Activated CD4-positive, alpha-beta memory T cell treated with anti-CD3 and anti-CD28 coated beads for 36 hours (primary cell): ENCODE measurements at regions of chr14 and their contacts with region 1.

Region 1: GRCh38 chr14:49977126-49977841 is 84.4 kb downstream of the ARF6 start:
- DNase-seq: peak; percentile 65
- H3K4me3 Mint-ChIP-seq: peak overlapping the region; percentile 66
- H3K27ac Mint-ChIP-seq: peak overlapping the region; percentile 91
- H3K4me1 Mint-ChIP-seq: peaks cover 87% of the 10 kb centered on the region
- H3K27me3 Mint-ChIP-seq: no peaks in the 10 kb centered on the region

Region 2: DNA sequence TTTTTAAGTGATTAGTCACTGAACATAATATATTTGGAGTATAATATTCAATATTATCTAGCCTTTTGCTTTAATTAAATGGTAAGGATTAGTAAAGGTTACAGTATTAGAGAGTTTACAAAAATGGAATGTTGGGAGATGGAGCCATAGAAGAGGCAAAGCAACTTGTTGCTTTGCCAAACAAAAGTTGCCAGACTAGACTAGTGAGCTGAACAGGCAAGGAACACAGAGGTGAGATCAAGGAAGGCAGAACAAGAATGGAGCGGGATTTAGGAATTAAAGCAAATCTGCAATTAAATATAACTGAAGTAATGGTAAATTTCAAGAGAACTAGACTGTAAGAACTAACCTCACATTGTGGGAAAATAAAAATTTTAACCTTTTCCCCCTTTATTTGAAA is 79.3 kb before region 1 on chr14:
- CTCF ChIA-PET with region 1: interaction called, 14 read pairs
- POLR2A ChIA-PET with region 1: interaction called, 47 read pairs
- intact Hi-C with region 1: no loop called
- DNase-seq: no peak
- H3K4me3 Mint-ChIP-seq: peak overlapping the region; percentile 75
- H3K27ac Mint-ChIP-seq: peak overlapping the region; percentile 93
- H3K4me1 Mint-ChIP-seq: peaks cover 29% of the 10 kb centered on the region
- H3K27me3 Mint-ChIP-seq: no peaks in the 10 kb centered on the region

Region 3: GRCh38 chr14:50047274-50047676 is 70.0 kb after region 1 on chr14:
- CTCF ChIA-PET with region 1: no interaction called
- POLR2A ChIA-PET with region 1: no interaction called
- intact Hi-C with region 1: no loop called
- DNase-seq: no peak
- H3K4me3 Mint-ChIP-seq: no peak overlapping the region
- H3K27ac Mint-ChIP-seq: peak overlapping the region; percentile 15
- H3K4me1 Mint-ChIP-seq: peaks cover 41% of the 10 kb centered on the region
- H3K27me3 Mint-ChIP-seq: no peaks in the 10 kb centered on the region

Region 4: DNA sequence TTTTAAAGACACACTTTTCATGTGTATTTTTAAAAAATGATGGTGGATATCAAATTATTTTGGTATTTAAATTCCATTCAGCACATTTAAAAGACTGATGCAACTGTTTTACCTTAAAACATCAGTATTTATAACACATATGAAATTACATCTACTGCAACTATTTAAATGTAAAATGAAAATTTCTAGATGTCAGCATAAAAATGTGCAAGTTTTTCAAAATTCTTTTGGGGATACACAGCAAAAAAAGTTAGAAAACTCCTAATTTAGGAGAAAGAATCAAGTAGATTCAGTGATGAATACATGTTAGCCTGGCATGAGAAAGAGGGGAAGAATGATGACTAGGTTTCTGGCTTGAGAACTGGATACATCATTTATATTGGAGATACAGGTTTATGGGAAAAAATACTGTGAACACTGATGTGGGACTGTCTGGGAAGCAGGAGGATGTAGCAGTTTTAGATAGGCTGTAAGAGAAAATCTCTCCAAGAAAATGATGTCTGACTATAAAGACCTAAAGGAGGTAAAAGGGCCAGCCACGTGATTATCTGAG is 244.9 kb after region 1 on chr14:
- CTCF ChIA-PET with region 1: no interaction called
- POLR2A ChIA-PET with region 1: no interaction called
- intact Hi-C with region 1: no loop called
- DNase-seq: no peak
- H3K4me3 Mint-ChIP-seq: no peak overlapping the region
- H3K27ac Mint-ChIP-seq: no peak overlapping the region
- H3K4me1 Mint-ChIP-seq: peaks cover 34% of the 10 kb centered on the region
- H3K27me3 Mint-ChIP-seq: no peaks in the 10 kb centered on the region